ENCODE measurements at regions of chr6 and their contacts with region 1.

Region 1: DNA sequence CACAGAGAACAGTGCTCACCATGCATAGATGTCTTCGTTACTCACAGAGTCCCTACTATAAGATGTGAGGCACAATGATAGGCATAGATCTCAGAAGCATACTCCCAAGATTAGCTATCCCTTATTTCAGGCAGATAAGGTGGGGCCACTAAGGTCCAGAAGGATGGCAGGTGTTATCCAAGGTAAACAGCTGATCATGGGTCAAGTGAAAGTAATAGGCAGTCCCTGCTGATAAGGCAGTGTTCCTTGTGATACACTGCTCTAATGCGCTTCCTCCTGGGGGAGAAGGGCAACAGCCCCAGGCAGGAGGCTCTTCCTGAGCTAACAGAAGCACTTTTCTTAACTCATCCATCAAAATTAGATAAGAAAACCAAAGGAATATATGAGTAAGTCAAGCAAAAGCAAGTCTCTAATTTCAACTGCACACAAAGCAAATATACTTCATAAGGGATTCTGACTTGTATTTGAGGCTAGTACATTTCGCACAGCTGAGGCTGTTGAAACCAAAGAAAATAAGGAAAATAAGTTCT is 42.2 kb downstream of the METTL24 start:
- DNase-seq: no peak
- H3K4me3 ChIP-seq: no peak overlapping the region
- H3K27ac ChIP-seq: no peak overlapping the region
- H3K4me1 ChIP-seq: no peaks in the 10 kb centered on the region
- H3K27me3 ChIP-seq: no peaks in the 10 kb centered on the region
- CTCF ChIP-seq: no peak
- EP300 ChIP-seq: no peak
- POLR2A ChIP-seq: no peak

Region 2: DNA sequence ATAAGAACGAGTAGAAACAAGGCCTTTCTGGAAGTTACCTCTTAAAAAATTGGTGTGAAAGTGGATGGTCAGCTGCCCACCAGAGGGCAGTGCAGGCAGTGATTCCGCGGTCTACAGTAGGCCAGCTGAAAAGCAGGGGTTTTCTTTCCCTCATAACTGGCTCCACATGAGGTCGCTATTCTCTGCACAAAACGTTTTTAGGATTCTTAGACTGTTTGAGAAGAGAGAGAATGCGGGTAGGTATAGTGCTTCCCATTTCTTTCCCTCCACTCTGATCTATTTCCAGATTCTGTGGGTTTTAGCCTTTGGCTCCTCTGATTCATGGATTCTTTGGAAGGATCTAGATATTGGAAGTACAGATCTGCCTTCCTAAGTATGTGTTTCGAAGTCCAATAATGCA is 610.7 kb before region 1 on chr6:
- in situ Hi-C with region 1: no loop called
- intact Hi-C with region 1: loop called (anchors 5 kb)
- DNase-seq: peak; percentile 84
- H3K4me3 ChIP-seq: no peak overlapping the region
- H3K27ac ChIP-seq: no peak overlapping the region
- H3K4me1 ChIP-seq: peaks cover 0 to 3% (median 0%) of the 10 kb centered on the region in 4 donors
- H3K27me3 ChIP-seq: no peaks in the 10 kb centered on the region
- CTCF ChIP-seq: peak; percentile 90 to 98 (median 93)
- EP300 ChIP-seq: no peak
- POLR2A ChIP-seq: no peak